WTC11 (cell line): ENCODE measurements at regions of chr2 and their contacts with region 1.

Region 1: DNA sequence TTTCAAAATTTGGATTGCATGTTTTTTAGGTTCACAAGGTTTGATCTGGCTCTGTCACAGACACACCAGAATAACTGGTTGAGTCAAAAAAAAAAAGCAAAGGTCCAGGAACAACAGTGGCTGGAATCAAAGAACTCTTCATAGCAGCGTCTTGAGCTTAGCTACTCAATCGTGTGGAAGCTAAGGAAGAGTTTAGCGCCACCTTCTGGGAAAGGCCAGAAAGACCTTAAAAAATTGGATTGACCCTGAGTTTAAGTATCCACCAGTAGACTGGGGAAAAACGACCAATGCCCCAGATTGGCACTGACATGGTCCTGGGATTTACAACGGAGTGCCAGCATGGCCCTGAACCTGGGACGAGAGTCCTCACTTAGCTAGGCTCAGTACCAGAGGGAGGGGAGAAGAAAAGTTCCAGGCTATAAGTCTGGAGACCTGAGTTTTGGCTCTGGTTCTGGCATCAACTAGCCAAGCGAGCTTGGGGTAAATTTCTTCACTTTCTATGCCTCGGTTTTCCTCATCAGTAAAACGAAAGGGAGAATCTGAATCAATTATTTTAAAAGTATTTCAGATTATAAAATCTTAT is 71.1 kb upstream of the TFCP2L1 start:
- DNase-seq: peak; percentile 59
- ATAC-seq: peak; percentile 91
- H3K4me3 Mint-ChIP-seq: no peak overlapping the region
- H3K27ac Mint-ChIP-seq: no peak overlapping the region
- H3K4me1 Mint-ChIP-seq: no peaks in the 10 kb centered on the region
- H3K27me3 Mint-ChIP-seq: no peaks in the 10 kb centered on the region
- CTCF ChIP-seq: peak; percentile 55; the same call in 1 of the 2 replicates

Region 2: DNA sequence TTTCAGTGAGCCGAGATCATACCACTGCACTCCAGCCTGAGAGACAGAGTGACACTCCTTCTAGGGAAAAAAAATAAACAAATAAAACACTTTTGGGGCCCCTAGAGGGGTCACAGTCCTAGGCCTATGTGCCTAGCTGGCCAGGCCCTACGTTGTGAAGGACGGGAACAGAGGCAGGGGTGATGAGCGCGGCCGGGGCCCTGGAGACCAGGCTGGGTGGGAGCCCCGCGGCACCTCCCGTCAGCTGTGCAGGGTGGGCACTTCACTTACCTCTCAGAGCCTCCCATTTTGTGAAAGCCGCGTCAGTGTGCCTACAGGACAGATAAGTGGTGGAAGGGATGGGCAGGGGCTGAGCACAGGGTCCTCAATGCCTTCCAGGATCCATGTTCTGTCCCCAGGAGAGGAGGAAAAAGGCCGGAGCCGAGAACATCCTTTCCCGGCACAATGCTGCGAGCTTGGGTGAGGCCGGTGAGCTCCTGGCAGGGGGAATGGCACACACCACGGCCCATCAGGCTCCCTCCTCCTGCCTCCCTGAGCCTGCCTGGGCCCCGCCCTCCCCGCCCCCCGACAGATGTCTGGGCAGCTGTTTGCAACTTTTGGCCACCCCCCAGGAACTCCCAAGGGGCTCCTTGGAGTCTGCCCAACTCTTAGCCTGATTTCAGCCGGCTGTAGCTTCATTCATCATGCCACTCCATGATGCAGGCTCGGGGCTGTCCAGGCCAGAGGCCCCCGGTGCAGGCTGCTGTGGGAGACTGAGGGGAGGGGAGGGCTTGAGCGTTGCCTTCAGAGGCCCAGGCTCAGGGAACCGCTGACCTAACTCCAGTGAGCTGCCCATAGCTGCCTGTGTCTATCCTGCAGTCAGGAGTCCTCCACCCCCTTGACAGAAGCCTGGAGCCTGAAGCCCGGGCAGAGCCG is 267.6 kb before region 1 on chr2:
- CTCF ChIA-PET with region 1: interaction called, 21 read pairs
- POLR2A ChIA-PET with region 1: no interaction called
- DNase-seq: no peak
- ATAC-seq: no peak
- H3K4me3 Mint-ChIP-seq: no peak overlapping the region
- H3K27ac Mint-ChIP-seq: no peak overlapping the region
- H3K4me1 Mint-ChIP-seq: no peaks in the 10 kb centered on the region
- H3K27me3 Mint-ChIP-seq: peaks cover 13% of the 10 kb centered on the region
- CTCF ChIP-seq: no peak

Region 3: GRCh38 chr2:121095257-121096080 is 260.7 kb before region 1 on chr2:
- CTCF ChIA-PET with region 1: interaction called, 65 read pairs
- POLR2A ChIA-PET with region 1: no interaction called
- DNase-seq: peak; percentile 79
- ATAC-seq: peak; percentile 88
- H3K4me3 Mint-ChIP-seq: no peak overlapping the region
- H3K27ac Mint-ChIP-seq: no peak overlapping the region
- H3K4me1 Mint-ChIP-seq: no peaks in the 10 kb centered on the region
- H3K27me3 Mint-ChIP-seq: peaks cover 13% of the 10 kb centered on the region
- CTCF ChIP-seq: peak; percentile 64

Region 4: DNA sequence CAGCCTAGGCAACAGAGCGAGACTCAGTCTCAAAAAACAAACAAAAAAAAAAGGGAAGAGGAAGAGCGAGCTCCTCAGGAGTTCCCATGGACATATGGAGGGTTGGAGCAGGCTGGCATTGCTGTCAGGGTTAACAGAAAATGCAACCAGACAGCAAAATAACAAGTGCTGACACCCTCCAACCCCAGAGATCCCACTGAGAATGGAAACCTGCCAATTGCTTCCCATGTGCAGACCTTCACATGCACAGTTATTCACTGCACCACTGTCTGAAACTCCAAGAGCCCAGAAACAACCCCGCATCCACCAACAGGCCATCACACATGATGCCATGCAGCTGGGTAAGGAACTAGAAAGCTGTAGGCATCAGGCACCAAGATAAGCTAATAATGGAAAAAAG is 114.7 kb before region 1 on chr2:
- CTCF ChIA-PET with region 1: no interaction called
- POLR2A ChIA-PET with region 1: no interaction called
- DNase-seq: no peak
- ATAC-seq: no peak
- H3K4me3 Mint-ChIP-seq: no peak overlapping the region
- H3K27ac Mint-ChIP-seq: no peak overlapping the region
- H3K4me1 Mint-ChIP-seq: no peaks in the 10 kb centered on the region
- H3K27me3 Mint-ChIP-seq: no peaks in the 10 kb centered on the region
- CTCF ChIP-seq: no peak

Region 5: GRCh38 chr2:121333834-121334558 is 22.2 kb before region 1 on chr2:
- CTCF ChIA-PET with region 1: interaction called, 51 read pairs
- POLR2A ChIA-PET with region 1: no interaction called
- DNase-seq: no peak
- ATAC-seq: no peak
- H3K4me3 Mint-ChIP-seq: no peak overlapping the region
- H3K27ac Mint-ChIP-seq: no peak overlapping the region
- H3K4me1 Mint-ChIP-seq: peaks cover 22% of the 10 kb centered on the region
- H3K27me3 Mint-ChIP-seq: no peaks in the 10 kb centered on the region
- CTCF ChIP-seq: no peak

Region 6: DNA sequence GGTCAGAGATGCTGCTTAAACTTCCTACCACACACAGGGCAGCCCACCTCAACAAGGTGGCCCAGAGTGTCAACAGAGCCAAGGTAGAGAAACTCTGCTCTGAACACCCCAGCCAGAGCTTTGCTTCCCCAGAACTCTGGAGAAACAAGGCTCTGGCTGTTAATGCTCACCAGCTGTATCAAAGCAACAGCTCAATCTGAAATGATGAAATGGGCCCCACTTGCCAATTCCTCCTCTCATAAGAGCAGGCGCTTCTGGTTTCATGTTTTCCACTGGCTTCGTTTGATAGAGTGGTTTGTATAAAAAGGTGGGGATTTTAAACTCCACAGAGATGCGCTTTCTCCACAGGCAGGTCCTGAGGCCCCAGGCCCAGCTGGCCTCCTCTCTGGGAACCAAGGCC is 10.3 kb before region 1 on chr2:
- CTCF ChIA-PET with region 1: interaction called, 14 read pairs
- POLR2A ChIA-PET with region 1: no interaction called
- DNase-seq: no peak
- ATAC-seq: no peak
- H3K4me3 Mint-ChIP-seq: no peak overlapping the region
- H3K27ac Mint-ChIP-seq: no peak overlapping the region
- H3K4me1 Mint-ChIP-seq: no peaks in the 10 kb centered on the region
- H3K27me3 Mint-ChIP-seq: no peaks in the 10 kb centered on the region
- CTCF ChIP-seq: no peak